ENCODE measurements at regions of chr7 and their contacts with region 1.

Region 1: GRCh38 chr7:23570592-23571200 is 26.5 kb upstream of the CCDC126 start:
- DNase-seq: peak; percentile 62
- ATAC-seq: peak; percentile 98
- H3K4me3 ChIP-seq: no peak overlapping the region
- H3K27ac ChIP-seq: no peak overlapping the region
- H3K4me1 ChIP-seq: no peaks in the 10 kb centered on the region
- H3K27me3 ChIP-seq: peaks cover 0 to under 1% of the 10 kb centered on the region in 2 experiments; a peak in 2 of 5 replicates
- CTCF ChIP-seq: peak; percentile 94
- EP300 ChIP-seq: no peak
- POLR2A ChIP-seq: no peak
- RAD21 ChIP-seq: peak; percentile 94

Region 2: GRCh38 chr7:23546897-23547572 is 23.7 kb before region 1 on chr7:
- CTCF ChIA-PET with region 1: interaction called, 4 read pairs
- POLR2A ChIA-PET with region 1: no interaction called
- in situ Hi-C with region 1: no loop called
- intact Hi-C with region 1: loop called (anchors 1 kb)
- DNase-seq: peak; percentile 87
- ATAC-seq: peak; percentile 83
- H3K4me3 ChIP-seq: no peak overlapping the region
- H3K27ac ChIP-seq: no peak overlapping the region
- H3K4me1 ChIP-seq: peaks cover 7% of the 10 kb centered on the region; the same call in 1 of the 2 replicates
- H3K27me3 ChIP-seq: peaks cover 0 to 2% of the 10 kb centered on the region in 2 experiments; a peak in 1 of 5 replicates
- CTCF ChIP-seq: peak; percentile 86
- EP300 ChIP-seq: no peak
- POLR2A ChIP-seq: no peak
- RAD21 ChIP-seq: peak; percentile 82

Region 3: GRCh38 chr7:23654508-23654907 is 83.8 kb after region 1 on chr7:
- CTCF ChIA-PET with region 1: interaction called, 3 read pairs
- POLR2A ChIA-PET with region 1: no interaction called
- in situ Hi-C with region 1: no loop called
- intact Hi-C with region 1: loop called (anchors 2 kb)
- DNase-seq: peak; percentile 15
- ATAC-seq: peak; percentile 62
- H3K4me3 ChIP-seq: no peak overlapping the region
- H3K27ac ChIP-seq: no peak overlapping the region
- H3K4me1 ChIP-seq: no peaks in the 10 kb centered on the region
- H3K27me3 ChIP-seq: peaks cover 0 to 3% of the 10 kb centered on the region in 2 experiments; a peak in 2 of 5 replicates
- CTCF ChIP-seq: peak; percentile 34
- EP300 ChIP-seq: no peak
- POLR2A ChIP-seq: no peak
- RAD21 ChIP-seq: peak; percentile 21; the same call in 1 of the 2 replicates